ENCODE measurements at regions of chrX and their contacts with region 1.

Region 1: DNA sequence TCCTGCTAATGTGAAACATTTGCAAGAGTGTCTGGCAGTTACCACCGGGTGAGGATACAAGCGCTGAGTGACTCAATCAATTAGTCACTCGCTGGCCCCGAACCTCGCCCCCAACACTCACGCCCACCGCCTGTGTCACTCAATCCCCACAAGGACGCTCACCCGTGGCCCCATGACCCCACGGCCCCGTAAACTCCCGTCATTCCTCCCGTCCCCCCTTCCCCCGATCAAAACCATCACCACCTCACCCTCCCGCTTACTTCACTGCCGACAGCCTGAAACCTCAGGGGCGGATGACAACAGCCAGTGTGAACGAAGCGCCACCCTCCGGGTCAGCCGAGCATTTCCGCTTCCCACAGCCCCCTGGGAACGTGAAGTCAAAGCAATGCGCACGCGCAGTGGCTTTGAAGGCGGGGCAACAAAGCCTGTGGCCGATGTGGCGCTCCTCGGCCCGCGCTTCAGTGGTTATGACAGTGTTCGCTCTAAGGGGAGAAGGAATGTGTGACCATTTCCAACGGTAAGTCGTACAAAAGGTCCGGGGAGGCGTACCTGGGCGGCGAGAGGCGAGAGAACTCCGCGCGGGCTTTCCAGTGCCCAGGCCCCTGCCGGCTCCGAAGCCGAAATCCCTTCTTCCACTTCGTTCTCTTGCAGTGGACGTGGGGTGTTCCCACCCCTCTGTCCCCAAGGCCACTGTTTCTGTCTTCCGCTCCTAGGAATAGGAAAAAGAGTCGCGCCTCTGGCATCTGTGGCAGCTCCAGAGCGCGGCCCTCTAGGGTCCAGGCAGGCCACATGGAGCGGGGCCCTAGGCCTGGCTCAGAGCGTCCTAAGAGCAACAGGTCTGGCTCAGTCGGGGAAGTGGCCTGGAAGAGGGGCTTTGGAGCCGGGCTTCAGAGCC is at the start of gene ZNF674:
- DNase-seq: peak; percentile 88
- H3K4me3 Mint-ChIP-seq: peak within 1 kb of the TSS; percentile 89
- H3K27ac Mint-ChIP-seq: peak within 1 kb of the TSS; percentile 92
- H3K4me1 Mint-ChIP-seq: peaks cover 13% of the 10 kb centered on the region
- H3K27me3 Mint-ChIP-seq: no peaks in the 10 kb centered on the region
- total RNA-seq, gene ZNF674: 2.4 and 2.5 TPM in 2 replicates

Region 2: GRCh38 chrX:46446727-46447378 is 98.5 kb before region 1 on chrX:
- intact Hi-C with region 1: loop called (anchors 1 kb)
- DNase-seq: peak; percentile 77
- H3K4me3 Mint-ChIP-seq: peak overlapping the region; percentile 84
- H3K27ac Mint-ChIP-seq: peak overlapping the region; percentile 90
- H3K4me1 Mint-ChIP-seq: peaks cover 19% of the 10 kb centered on the region
- H3K27me3 Mint-ChIP-seq: no peaks in the 10 kb centered on the region

Region 3: GRCh38 chrX:46463682-46464081 is 81.7 kb before region 1 on chrX:
- intact Hi-C with region 1: no loop called
- DNase-seq: no peak
- H3K4me3 Mint-ChIP-seq: no peak overlapping the region
- H3K27ac Mint-ChIP-seq: peak overlapping the region; percentile 23
- H3K4me1 Mint-ChIP-seq: peaks cover 15% of the 10 kb centered on the region
- H3K27me3 Mint-ChIP-seq: no peaks in the 10 kb centered on the region

Region 4: DNA sequence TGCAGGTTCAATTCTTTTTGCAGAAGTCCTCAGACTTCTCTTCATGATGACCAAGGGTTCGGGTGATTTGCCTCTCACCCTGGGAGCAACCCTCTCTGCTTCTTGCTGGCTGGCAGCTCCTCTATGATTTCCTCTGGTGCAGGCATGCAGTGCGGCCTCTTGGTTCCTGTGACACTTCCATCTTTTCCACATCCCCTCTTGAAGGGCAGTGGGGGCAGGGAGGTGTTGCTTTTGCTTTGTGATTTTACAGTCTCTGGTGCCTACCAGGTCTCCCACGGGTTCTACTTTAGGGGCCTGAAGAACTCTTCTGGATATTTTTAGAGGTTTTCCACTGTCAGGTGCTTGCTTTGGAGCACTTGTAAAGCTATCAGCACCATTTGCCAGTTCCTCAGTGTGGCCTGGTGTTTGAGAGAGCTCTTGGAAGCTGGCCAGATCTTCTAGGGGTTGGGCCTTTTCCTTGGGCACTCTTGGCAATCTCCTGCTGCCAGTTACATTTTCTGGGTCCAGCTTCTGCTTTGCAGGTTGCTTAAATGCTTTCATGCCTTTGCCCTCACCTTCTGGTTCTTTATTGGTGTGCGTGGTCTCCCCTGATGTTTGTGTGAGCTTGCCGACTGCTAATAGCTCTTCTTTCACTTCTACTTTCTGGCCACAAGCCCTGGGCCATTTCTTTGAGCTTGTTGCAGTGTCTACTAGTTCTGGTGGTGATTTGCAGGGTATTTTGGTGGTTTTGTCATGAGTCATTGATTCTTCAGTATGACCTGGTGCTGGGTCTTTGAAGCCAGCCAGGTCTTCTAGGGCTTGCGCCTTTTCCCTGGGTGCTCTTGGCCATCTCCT is 16.7 kb after region 1 on chrX:
- intact Hi-C with region 1: no loop called
- DNase-seq: no peak
- H3K4me3 Mint-ChIP-seq: no peak overlapping the region
- H3K27ac Mint-ChIP-seq: peak overlapping the region; percentile 22
- H3K4me1 Mint-ChIP-seq: peaks cover 15% of the 10 kb centered on the region
- H3K27me3 Mint-ChIP-seq: no peaks in the 10 kb centered on the region

Region 5: DNA sequence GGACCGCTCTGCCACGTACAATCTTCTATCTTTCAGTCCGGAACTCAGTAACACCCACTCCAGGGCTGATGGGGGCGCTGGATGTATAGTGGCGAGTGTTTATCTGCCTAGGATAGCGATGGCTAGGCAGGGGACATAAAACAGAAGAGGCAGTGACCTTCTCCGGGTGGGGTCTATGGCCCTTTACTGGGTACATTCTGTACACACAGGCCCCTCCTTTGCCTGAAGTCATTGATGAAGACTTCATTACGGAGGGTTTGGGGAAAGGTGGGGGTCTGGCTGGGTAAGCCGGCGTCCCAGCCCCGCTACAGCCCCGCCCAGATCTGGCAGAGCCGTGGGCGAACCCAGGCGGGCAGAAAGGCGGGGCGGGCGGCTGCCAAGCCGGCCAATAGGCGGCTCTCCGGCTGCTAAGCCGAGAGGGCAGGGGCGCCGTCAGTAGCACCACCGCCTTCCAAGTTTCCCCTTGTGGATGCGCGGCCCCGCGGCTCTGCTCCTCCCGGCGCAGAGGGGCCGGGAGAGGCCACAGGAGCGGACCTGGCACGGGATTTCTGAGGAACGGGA is 28.1 kb after region 1 on chrX and contains the start of gene CHST7:
- intact Hi-C with region 1: loop called (anchors 1 kb)
- DNase-seq: peak; percentile 38
- H3K4me3 Mint-ChIP-seq: peak within 1 kb of the TSS; percentile 78
- H3K27ac Mint-ChIP-seq: peak within 1 kb of the TSS; percentile 42
- H3K4me1 Mint-ChIP-seq: peaks cover 32% of the 10 kb centered on the region
- H3K27me3 Mint-ChIP-seq: no peaks in the 10 kb centered on the region
- total RNA-seq, gene CHST7: 3.8 TPM in 2 replicates

Region 6: DNA sequence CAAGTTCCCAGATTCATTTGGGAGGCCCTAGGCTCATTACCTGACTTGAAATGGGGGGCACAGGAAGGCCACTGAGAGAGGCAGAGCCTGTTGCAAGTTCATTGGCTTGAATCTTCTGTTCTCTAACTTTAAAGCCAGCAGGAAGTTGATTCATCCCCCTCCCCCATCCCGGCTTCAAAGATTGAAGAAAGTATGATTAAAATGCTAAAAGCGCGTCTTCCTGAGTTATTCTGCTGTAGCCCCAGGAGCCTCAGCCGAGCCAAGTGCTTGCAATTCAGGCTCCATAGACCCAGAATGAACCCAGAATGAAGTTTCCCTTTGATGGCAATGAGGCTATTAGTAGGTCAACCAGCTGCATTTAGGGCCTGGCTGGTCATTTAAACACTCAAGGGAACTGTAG is 42.9 kb after region 1 on chrX:
- intact Hi-C with region 1: loop called (anchors 5 kb)
- DNase-seq: no peak
- H3K4me3 Mint-ChIP-seq: peak overlapping the region; percentile 65
- H3K27ac Mint-ChIP-seq: peak overlapping the region; percentile 84
- H3K4me1 Mint-ChIP-seq: peaks cover 21% of the 10 kb centered on the region
- H3K27me3 Mint-ChIP-seq: no peaks in the 10 kb centered on the region

Region 7: GRCh38 chrX:46653482-46653881 is 108.1 kb after region 1 on chrX:
- intact Hi-C with region 1: no loop called
- DNase-seq: no peak
- H3K4me3 Mint-ChIP-seq: no peak overlapping the region
- H3K27ac Mint-ChIP-seq: no peak overlapping the region
- H3K4me1 Mint-ChIP-seq: peaks cover 4% of the 10 kb centered on the region
- H3K27me3 Mint-ChIP-seq: no peaks in the 10 kb centered on the region

Measured in activated T-helper 2 cell treated with anti-CD3 and anti-CD28 coated beads, Interferon-gamma antibody, Interleukin-2, Interleukin-4, amounts not matched to agents 10 μg/mL and 5 μg/mL and 100 μg/mL, durations not matched to agents 14 hours and 24 hours and 36 hours (primary cell).